Calu3 (cell line): ENCODE measurements at regions of chr20 and their contacts with region 1.

Region 1: DNA sequence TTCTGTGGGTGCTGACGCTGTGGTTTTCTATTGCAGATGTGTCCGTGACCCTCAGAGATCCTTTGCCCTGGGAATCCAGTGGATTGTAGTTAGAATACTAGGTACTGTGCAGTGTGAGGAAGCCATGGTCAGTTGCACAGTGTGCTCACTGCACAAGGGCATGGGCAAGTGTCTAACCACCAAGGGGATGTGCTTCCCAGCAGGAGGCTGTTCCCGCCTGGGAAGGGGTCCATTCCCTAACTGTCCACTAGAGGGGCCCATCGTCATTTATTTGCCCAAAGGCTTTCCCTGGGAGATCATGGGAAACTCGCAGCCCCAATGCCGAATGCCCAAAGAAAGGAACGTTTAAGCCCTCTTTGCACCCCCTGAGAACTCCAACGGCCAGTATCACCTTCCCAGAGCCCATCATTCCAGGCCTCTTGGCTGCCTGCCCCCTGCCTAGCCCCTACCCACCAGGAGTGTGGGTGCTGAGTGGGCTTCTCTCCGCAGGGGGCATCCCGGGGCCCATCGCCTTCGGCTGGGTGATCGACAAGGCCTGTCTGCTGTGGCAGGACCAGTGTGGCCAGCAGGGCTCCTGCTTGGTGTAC is 26.2 kb downstream of the SLCO4A1 start:
- DNase-seq: peak; percentile 89
- H3K4me3 Mint-ChIP-seq: peak overlapping the region; percentile 10
- H3K27ac Mint-ChIP-seq: peak overlapping the region; percentile 72
- H3K4me1 Mint-ChIP-seq: peaks cover 28% of the 10 kb centered on the region
- H3K27me3 Mint-ChIP-seq: no peaks in the 10 kb centered on the region
- CTCF ChIP-seq: peak; percentile 93

Region 2: GRCh38 chr20:62623488-62624324 is 44.8 kb before region 1 on chr20:
- CTCF ChIA-PET with region 1: interaction called, 13 read pairs
- intact Hi-C with region 1: loop called (anchors 5 kb)
- DNase-seq: peak; percentile 98
- H3K4me3 Mint-ChIP-seq: peak overlapping the region; percentile 44
- H3K27ac Mint-ChIP-seq: peak overlapping the region; percentile 86
- H3K4me1 Mint-ChIP-seq: peaks cover 37% of the 10 kb centered on the region
- H3K27me3 Mint-ChIP-seq: no peaks in the 10 kb centered on the region
- CTCF ChIP-seq: no peak

Region 3: DNA sequence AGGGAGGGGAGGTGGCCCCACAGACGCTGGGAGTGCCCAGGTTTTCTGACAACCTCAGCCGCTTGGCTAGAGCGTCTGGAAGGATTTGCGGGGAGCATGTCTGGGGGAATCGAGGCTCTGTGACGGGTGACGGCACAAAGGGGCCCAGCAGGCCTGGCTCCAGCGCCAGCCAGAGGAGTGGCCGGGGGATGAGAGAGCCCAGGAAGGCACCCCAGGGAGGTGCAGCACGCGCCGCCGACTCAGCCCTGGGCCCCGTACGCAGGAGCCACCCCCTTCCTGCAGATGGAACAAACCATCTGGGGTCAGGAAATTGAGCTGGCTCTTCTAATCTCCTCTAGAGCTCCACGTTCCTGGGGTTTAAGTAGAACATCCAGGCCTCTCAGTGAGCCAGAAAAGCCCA is 32.1 kb before region 1 on chr20:
- CTCF ChIA-PET with region 1: no interaction called
- intact Hi-C with region 1: no loop called
- DNase-seq: no peak
- H3K4me3 Mint-ChIP-seq: no peak overlapping the region
- H3K27ac Mint-ChIP-seq: no peak overlapping the region
- H3K4me1 Mint-ChIP-seq: no peaks in the 10 kb centered on the region
- H3K27me3 Mint-ChIP-seq: peaks cover 74% of the 10 kb centered on the region
- CTCF ChIP-seq: no peak

Region 4: DNA sequence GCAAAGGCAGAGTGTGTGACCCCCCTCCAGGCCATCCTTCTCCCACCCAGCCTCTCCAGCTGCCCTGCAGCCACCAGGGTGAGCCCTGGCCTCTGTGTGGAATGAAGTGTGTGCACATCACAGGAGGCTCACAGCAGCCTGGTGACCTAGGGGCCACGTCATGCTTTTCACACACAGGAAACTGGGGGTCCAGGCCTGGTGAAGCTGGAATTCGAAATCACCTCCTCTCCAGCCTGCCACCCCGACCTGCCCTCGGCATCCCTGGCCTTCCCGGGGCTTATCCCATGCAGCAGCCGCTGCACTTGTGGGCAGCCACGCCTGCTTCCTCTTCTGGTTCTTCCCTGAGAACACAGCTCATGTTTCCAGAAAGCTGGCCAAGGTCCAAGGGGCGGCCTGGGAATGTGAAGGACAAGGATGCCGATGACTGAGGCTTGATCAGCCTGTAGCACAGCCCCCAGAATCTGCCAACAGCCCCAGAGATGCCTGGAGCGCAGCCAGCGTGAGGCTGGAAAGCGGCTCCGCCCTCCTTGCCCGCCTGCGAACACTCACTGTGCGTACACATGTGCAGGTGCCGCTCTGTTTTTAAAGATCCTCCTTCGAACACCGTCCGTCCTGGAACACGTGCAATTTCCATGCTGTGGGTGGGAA is 35.9 kb after region 1 on chr20:
- CTCF ChIA-PET with region 1: interaction called, 6 read pairs
- intact Hi-C with region 1: loop called (anchors 2 kb)
- DNase-seq: peak; percentile 94
- H3K4me3 Mint-ChIP-seq: peak overlapping the region; percentile 36
- H3K27ac Mint-ChIP-seq: peak overlapping the region; percentile 29
- H3K4me1 Mint-ChIP-seq: peaks cover 30% of the 10 kb centered on the region
- H3K27me3 Mint-ChIP-seq: peaks cover 54% of the 10 kb centered on the region
- CTCF ChIP-seq: no peak

Region 5: GRCh38 chr20:62808211-62808865 is 139.8 kb after region 1 on chr20:
- CTCF ChIA-PET with region 1: interaction called, 10 read pairs
- intact Hi-C with region 1: loop called (anchors 1 kb)
- DNase-seq: peak; percentile 89
- H3K4me3 Mint-ChIP-seq: no peak overlapping the region
- H3K27ac Mint-ChIP-seq: no peak overlapping the region
- H3K4me1 Mint-ChIP-seq: peaks cover 31% of the 10 kb centered on the region
- H3K27me3 Mint-ChIP-seq: no peaks in the 10 kb centered on the region
- CTCF ChIP-seq: peak; percentile 99